ENCODE measurements at regions of chr1 and their contacts with region 1.

Region 1: GRCh38 chr1:158107916-158108315 is 72.8 kb upstream of the CD1D start:
- DNase-seq: no peak
- H3K4me3 ChIP-seq: no peak overlapping the region
- H3K27ac ChIP-seq: no peak overlapping the region
- H3K4me1 ChIP-seq: peaks cover 0 to under 1% (median under 1%) of the 10 kb centered on the region in 4 experiments
- H3K27me3 ChIP-seq: peaks cover 0 to 16% (median 4%) of the 10 kb centered on the region in 5 experiments

Region 2: GRCh38 chr1:158117854-158118704 is 10.2 kb after region 1 on chr1:
- CTCF ChIA-PET with region 1: interaction called, 22 read pairs
- POLR2A ChIA-PET with region 1: interaction called, 3 read pairs
- DNase-seq: peak; percentile 76 to 83 (median 82)
- H3K4me3 ChIP-seq: peak overlapping the region in 6 of 7 experiments; percentile 10 to 63 (median 26)
- H3K27ac ChIP-seq: no peak overlapping the region
- H3K4me1 ChIP-seq: peaks cover 0 to 16% (median 11%) of the 10 kb centered on the region in 4 experiments
- H3K27me3 ChIP-seq: peaks cover 0 to 31% (median 10%) of the 10 kb centered on the region in 5 experiments